HEK293 (cell line): ENCODE measurements at regions of chr15 and their contacts with region 1.

Region 1: DNA sequence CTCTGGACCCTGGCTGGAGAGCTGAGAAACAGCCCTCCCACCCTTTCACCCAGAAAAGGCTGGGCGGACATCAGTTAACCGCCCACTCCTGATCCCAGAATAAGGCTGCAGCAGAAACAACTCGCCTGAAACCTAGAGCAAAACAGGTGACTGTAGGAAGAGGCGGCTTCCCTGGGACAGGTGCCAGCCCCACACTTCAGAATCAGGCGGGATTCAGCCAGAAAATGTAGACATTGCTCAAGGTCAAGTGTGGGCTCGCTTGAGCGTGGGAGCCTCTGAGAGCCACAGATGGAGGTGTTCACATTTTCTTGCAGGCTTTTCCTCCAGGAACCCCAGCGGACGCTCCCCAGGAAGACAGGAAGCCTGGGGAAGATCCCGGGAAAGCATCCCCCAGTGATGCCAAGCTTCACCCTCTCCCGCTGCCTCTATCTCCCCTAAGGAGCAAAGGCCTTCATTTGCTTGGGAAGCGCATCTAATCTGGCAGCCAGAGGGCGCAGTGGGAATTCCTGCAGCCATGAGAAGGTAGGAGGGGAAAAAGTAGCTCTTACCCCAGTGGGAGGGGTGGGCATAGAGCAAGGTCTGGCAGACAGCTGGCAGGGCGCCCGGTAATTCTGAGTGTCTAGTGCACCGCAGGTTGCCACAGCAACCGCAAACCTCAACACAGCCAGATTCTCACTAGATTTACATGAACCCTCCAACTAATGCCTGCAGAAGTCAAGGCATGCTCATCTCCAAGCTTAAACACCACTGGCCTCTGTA is 77.7 kb downstream of the OCA2 start:
- H3K4me3 ChIP-seq: no peak overlapping the region
- H3K27ac ChIP-seq: no peak overlapping the region
- H3K4me1 ChIP-seq: no peaks in the 10 kb centered on the region
- CTCF ChIP-seq: peak; percentile 76

Region 2: GRCh38 chr15:27844018-27844666 is 177.3 kb before region 1 on chr15:
- CTCF ChIA-PET with region 1: no interaction called
- POLR2A ChIA-PET with region 1: no interaction called
- H3K4me3 ChIP-seq: no peak overlapping the region
- H3K27ac ChIP-seq: no peak overlapping the region
- H3K4me1 ChIP-seq: no peaks in the 10 kb centered on the region
- CTCF ChIP-seq: no peak

Region 3: GRCh38 chr15:27956285-27956684 is 65.2 kb before region 1 on chr15:
- CTCF ChIA-PET with region 1: no interaction called
- POLR2A ChIA-PET with region 1: no interaction called
- H3K4me3 ChIP-seq: no peak overlapping the region
- H3K27ac ChIP-seq: no peak overlapping the region
- H3K4me1 ChIP-seq: no peaks in the 10 kb centered on the region
- CTCF ChIP-seq: no peak

Region 4: DNA sequence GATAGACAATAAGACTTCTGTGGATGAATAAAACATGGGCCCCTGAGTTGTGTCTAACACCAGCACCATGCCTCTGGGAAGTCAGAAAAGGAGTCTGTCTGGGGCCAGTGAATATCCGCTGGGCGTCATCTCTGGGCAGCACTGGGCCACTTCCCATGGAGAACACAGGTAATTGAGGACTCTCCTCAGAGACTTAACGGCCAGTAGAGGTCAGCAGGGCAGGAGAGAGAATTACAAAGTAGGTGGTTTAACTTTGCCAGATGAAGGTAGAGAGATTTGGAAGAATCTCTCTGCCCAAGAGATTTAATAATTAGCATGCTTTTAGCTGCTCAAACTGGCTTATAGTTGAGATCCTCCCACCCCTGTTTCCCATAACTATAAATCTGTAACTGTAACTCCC is 12.0 kb after region 1 on chr15:
- CTCF ChIA-PET with region 1: interaction called, 29 read pairs
- POLR2A ChIA-PET with region 1: no interaction called
- H3K4me3 ChIP-seq: no peak overlapping the region
- H3K27ac ChIP-seq: no peak overlapping the region
- H3K4me1 ChIP-seq: no peaks in the 10 kb centered on the region
- CTCF ChIP-seq: no peak

Region 5: DNA sequence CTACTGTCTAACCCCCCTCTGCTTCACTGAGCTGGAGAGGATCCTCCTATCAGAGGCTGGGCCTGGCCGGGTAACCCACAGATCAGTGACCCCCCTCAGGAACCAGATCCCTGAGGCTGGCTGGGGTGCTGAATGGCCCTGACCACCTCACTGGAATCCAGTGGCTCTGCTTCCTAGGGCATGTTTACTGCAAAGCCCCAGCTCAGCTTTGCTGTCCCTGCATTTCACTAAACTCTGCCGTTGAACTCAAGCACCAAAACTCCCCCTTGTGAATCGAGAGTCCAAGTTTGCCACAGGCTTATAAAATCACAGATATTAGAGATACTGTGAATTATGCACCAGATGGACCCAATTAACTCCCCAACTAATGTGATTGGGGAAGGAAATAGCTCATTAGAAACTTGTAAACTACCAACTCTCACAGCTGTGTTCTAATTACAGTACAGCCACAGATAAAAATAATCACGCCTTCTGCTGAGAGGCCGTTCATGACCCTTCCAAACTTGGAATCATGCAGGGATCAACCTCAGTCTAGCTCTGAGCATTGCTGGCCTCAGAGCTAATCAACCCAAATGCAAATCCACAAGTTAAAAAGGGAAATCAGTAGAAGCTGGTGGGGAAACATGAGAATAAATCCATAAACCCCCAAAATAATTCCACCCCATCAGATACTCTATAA is 30.6 kb after region 1 on chr15:
- CTCF ChIA-PET with region 1: interaction called, 16 read pairs
- POLR2A ChIA-PET with region 1: no interaction called
- H3K4me3 ChIP-seq: no peak overlapping the region
- H3K27ac ChIP-seq: no peak overlapping the region
- H3K4me1 ChIP-seq: no peaks in the 10 kb centered on the region
- CTCF ChIP-seq: no peak